Activated CD8-positive, alpha-beta memory T cell treated with anti-CD3 and anti-CD28 coated beads, Interleukin-2, amount 10 ng/mL, durations not matched to agents 7 days and 5 days (primary cell): ENCODE measurements at regions of chr3 and their contacts with region 1.

Region 1: GRCh38 chr3:160400702-160401150 is 1.3 kb downstream of the SMC4 start:
- DNase-seq: peak; percentile 47
- ATAC-seq: peak; percentile 4
- H3K4me3 Mint-ChIP-seq: peak overlapping the region; percentile 94
- H3K27ac Mint-ChIP-seq: peak overlapping the region; percentile 99
- H3K4me1 Mint-ChIP-seq: peaks cover 49% of the 10 kb centered on the region
- H3K27me3 Mint-ChIP-seq: peaks cover 3% of the 10 kb centered on the region

Region 2: GRCh38 chr3:160319322-160319721 is 81.4 kb before region 1 on chr3:
- CTCF ChIA-PET with region 1: no interaction called
- DNase-seq: no peak
- ATAC-seq: no peak
- H3K4me3 Mint-ChIP-seq: no peak overlapping the region
- H3K27ac Mint-ChIP-seq: no peak overlapping the region
- H3K4me1 Mint-ChIP-seq: no peaks in the 10 kb centered on the region
- H3K27me3 Mint-ChIP-seq: no peaks in the 10 kb centered on the region

Region 3: GRCh38 chr3:160413613-160414248 is 13.0 kb after region 1 on chr3:
- CTCF ChIA-PET with region 1: interaction called, 10 read pairs
- DNase-seq: peak; percentile 76
- ATAC-seq: peak; percentile 71
- H3K4me3 Mint-ChIP-seq: no peak overlapping the region
- H3K27ac Mint-ChIP-seq: no peak overlapping the region
- H3K4me1 Mint-ChIP-seq: peaks cover 46% of the 10 kb centered on the region
- H3K27me3 Mint-ChIP-seq: no peaks in the 10 kb centered on the region

Region 4: DNA sequence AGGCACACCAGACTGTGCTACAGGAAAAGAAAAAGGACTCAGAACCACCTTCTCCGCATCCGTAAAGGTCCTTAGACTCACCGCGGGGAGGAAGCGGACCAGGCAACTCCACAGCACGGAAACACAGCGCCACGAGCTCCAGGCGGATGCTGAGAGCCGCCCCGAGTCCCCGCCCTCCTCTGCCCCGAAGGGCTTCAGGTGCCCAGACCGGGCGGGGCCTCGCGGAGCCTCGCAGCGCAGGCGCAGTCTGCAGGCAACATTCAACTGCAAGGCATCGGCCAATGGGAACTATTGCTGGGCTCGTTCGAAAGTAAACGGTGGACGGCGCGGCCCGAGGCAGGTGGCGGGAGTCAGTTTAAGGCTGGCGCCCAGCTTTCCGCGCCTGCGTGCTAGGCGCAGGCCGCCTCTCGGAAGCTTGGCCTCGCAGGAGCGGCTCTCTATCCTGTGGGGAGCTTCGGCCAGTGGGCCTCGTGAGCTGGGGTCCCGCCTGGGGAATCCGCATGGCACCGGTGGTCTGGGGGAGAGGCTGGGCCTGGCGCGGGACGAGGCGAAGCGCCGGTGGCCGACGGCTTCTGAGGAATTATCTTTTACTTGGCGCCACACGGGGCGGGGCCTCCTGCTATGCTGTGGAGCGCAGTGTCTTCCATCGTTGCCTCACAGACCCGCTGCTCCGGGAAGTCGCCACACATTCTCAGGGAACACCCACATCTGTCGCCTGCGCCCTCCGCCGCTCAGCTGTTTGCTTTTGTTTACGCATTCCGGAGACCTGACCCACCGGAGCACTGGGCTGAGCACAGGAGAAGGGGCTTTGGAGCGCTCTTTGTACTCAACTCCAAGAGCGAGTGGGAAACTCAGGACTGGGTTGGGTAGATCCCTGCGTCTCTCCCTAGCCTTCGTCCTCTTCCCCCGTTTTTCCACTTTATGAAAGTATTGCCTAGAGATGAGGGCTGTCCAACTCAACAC is 49.2 kb after region 1 on chr3 and contains the start of gene TRIM59:
- CTCF ChIA-PET with region 1: interaction called, 10 read pairs
- DNase-seq: peak; percentile 99
- ATAC-seq: peak; percentile 93
- H3K4me3 Mint-ChIP-seq: peak within 1 kb of the TSS; percentile 97
- H3K27ac Mint-ChIP-seq: peak within 1 kb of the TSS; percentile 99
- H3K4me1 Mint-ChIP-seq: peaks cover 33% of the 10 kb centered on the region
- H3K27me3 Mint-ChIP-seq: no peaks in the 10 kb centered on the region
- total RNA-seq, gene TRIM59: 48.0 to 51.6 TPM